Panc1 (cell line): ENCODE measurements at regions of chr16 and their contacts with region 1.

Region 1: DNA sequence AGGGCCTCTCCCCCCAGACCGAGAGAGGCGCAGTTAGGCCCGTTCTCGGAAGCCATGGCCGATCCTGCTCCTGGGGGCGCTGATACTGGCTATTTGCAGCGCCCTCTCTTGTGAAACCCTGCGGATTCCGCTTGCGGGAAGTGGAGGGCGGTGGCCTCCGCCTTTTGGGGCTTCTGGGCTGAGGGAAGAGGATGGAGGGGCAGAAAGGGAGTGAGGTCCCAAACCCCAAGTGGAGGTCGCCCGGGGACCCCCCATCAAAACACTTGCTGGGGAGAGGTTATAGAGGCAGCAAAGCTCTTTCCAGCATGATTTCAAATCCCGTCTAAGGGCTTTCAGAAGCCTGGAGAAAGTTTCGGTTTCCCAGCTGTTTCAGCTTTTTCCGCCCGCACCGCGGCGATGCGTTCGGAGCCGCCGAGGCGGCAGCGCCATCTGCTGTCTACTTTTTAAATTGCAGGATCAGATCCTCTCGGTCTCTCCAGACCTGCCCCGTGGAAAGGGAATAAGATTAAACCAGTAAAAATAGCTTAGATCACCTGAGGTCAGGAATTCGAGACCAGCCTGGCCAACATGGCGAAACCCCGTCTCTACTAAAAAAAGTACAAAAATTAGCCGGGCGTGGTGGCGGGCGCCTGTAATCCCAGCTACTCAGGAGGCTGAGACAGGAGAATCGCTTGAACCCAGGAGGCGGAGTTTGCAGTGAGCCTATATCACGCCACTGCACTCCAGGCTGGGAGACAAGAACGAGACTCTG is 15.8 kb downstream of the SNX20 start:
- DNase-seq: no peak
- ATAC-seq: peak; percentile 95
- H3K4me3 ChIP-seq: peak overlapping the region; percentile 32 to 50
- H3K27ac ChIP-seq: no peak overlapping the region
- H3K4me1 ChIP-seq: no peaks in the 10 kb centered on the region
- H3K27me3 ChIP-seq: no peaks in the 10 kb centered on the region
- CTCF ChIP-seq: peak; percentile 93

Region 2: DNA sequence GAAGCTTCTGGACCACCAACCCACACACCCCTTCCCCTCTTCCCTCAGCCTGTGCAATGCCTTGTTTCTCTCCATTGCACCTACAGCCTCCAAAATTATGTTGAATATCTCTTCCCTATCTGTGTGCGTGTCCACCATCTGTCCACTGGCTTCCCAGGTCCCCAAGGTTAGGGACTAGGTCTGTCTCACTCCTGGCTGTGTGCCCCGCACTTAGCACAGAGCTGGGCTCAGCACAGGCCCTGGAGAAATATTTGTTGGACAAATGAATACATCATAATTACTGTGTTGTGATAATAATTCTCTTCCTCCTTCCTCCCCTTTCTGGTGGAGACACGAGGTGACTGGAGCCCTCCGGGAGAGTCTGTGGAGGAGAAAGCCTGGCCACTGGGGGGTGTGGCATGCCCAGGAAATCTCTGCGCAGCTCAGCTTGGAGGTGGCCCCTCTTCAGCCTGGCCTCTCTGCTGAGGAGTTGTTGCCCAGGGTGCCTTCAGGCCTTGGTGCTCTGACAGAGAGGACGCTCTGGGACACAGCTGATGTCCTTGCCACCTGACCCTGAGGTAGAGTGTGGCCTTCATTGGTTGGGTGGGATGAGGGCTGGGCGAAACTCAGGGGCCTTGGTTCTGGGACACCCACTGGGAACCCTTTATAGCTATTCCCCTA is 293.2 kb before region 1 on chr16:
- CTCF ChIA-PET with region 1: no interaction called
- POLR2A ChIA-PET with region 1: no interaction called
- in situ Hi-C with region 1: no loop called
- intact Hi-C with region 1: loop called (anchors 5 kb)
- DNase-seq: no peak
- ATAC-seq: no peak
- H3K4me3 ChIP-seq: no peak overlapping the region
- H3K27ac ChIP-seq: no peak overlapping the region
- H3K4me1 ChIP-seq: no peaks in the 10 kb centered on the region
- H3K27me3 ChIP-seq: no peaks in the 10 kb centered on the region
- CTCF ChIP-seq: peak; percentile 48

Region 3: GRCh38 chr16:50806099-50807062 is 141.1 kb after region 1 on chr16:
- CTCF ChIA-PET with region 1: interaction called, 9 read pairs
- POLR2A ChIA-PET with region 1: no interaction called
- in situ Hi-C with region 1: no loop called
- intact Hi-C with region 1: loop called (anchors 5 kb)
- DNase-seq: peak; percentile 77
- ATAC-seq: peak; percentile 97
- H3K4me3 ChIP-seq: peak overlapping the region; percentile 25 to 34
- H3K27ac ChIP-seq: no peak overlapping the region
- H3K4me1 ChIP-seq: no peaks in the 10 kb centered on the region
- H3K27me3 ChIP-seq: no peaks in the 10 kb centered on the region
- CTCF ChIP-seq: peak; percentile 93